IMR-90 (cell line): ENCODE measurements at regions of chr6 and their contacts with region 1.

Region 1: DNA sequence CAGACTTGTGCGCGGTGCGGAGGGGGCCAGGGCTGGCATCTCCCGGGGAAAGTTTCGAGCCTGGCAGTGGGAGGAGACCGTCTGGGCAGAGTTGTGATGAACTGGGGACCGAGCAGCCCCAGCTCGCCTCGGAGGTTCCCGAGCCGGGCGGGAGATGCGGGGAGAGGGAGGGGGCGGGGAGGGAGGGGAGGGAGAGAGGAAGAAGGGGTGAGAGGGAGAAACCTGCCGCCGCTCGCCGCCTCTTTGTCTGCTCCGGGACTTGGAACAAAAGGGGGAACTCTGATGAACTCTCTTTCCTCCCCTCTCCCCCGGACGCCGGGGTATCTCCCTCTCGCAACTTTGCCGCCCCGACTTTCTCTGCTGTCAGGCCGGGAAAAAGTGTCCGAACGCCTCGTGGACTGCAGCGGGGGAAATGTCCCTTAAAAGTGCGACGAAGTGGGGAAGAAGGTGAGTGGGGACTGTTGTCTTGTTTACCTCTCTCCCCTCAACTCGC is 72.7 kb downstream of the SOX4 start:
- DNase-seq: no peak
- ATAC-seq: peak; percentile 69
- H3K4me3 ChIP-seq: peak overlapping the region; percentile 74
- H3K27ac ChIP-seq: peak overlapping the region; percentile 85
- H3K4me1 ChIP-seq: peaks cover 2% of the 10 kb centered on the region; the same call in 1 of the 2 replicates
- H3K27me3 ChIP-seq: peaks cover 21% of the 10 kb centered on the region
- CTCF ChIP-seq: no peak
- POLR2A ChIP-seq: no peak
- RAD21 ChIP-seq: no peak

Region 2: GRCh38 chr6:21742238-21742660 is 76.0 kb after region 1 on chr6:
- CTCF ChIA-PET with region 1: no interaction called
- POLR2A ChIA-PET with region 1: no interaction called
- dilution Hi-C with region 1: no loop called
- in situ Hi-C with region 1: no loop called
- intact Hi-C with region 1: loop called (anchors 2 kb)
- DNase-seq: peak; percentile 98
- ATAC-seq: peak; percentile 82
- H3K4me3 ChIP-seq: no peak overlapping the region
- H3K27ac ChIP-seq: peak overlapping the region; percentile 47; the same call in 1 of the 2 replicates
- H3K4me1 ChIP-seq: peaks cover 11% of the 10 kb centered on the region
- H3K27me3 ChIP-seq: no peaks in the 10 kb centered on the region
- CTCF ChIP-seq: no peak
- POLR2A ChIP-seq: no peak
- RAD21 ChIP-seq: no peak

Region 3: GRCh38 chr6:21808045-21808470 is 141.8 kb after region 1 on chr6:
- CTCF ChIA-PET with region 1: no interaction called
- POLR2A ChIA-PET with region 1: no interaction called
- dilution Hi-C with region 1: no loop called
- in situ Hi-C with region 1: no loop called
- intact Hi-C with region 1: no loop called
- DNase-seq: peak; percentile 78
- ATAC-seq: peak; percentile 91
- H3K4me3 ChIP-seq: no peak overlapping the region
- H3K27ac ChIP-seq: peak overlapping the region; percentile 57
- H3K4me1 ChIP-seq: peaks cover 18% of the 10 kb centered on the region
- H3K27me3 ChIP-seq: no peaks in the 10 kb centered on the region
- CTCF ChIP-seq: no peak
- POLR2A ChIP-seq: no peak
- RAD21 ChIP-seq: no peak